GM12878 (cell line): ENCODE measurements at regions of chrX and their contacts with region 1.

Region 1: DNA sequence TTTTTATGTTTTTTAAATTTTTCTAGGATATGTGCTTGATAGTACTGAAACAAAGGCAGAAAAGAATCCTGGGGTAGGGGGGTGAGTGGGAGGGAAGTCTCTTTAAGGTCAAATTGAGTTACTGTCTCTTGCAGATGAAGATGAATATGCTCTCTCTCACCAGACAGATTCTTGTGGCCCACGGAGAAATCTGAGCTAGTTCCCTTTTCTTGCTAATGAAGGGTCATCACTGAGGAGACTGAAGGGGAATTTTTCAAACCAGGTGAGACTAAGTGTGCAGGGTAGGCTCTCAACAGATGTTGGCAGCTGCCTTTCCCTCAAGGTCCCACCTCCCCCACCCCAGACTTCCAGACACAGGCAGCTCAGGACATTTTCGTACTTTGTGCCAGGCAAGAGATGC is 21.5 kb downstream of the FAM9C start:
- DNase-seq: no peak
- ATAC-seq: peak; percentile 91
- H3K4me3 ChIP-seq: no peak overlapping the region
- H3K27ac ChIP-seq: peak overlapping the region; percentile 47
- H3K4me1 ChIP-seq: peaks cover 43% of the 10 kb centered on the region
- H3K27me3 ChIP-seq: no peaks in the 10 kb centered on the region
- CTCF ChIP-seq: no peak
- EP300 ChIP-seq: peak in 1 of 2 experiments; percentile 75; a peak in 2 of 4 replicates
- POLR2A ChIP-seq: no peak
- RAD21 ChIP-seq: no peak

Region 2: DNA sequence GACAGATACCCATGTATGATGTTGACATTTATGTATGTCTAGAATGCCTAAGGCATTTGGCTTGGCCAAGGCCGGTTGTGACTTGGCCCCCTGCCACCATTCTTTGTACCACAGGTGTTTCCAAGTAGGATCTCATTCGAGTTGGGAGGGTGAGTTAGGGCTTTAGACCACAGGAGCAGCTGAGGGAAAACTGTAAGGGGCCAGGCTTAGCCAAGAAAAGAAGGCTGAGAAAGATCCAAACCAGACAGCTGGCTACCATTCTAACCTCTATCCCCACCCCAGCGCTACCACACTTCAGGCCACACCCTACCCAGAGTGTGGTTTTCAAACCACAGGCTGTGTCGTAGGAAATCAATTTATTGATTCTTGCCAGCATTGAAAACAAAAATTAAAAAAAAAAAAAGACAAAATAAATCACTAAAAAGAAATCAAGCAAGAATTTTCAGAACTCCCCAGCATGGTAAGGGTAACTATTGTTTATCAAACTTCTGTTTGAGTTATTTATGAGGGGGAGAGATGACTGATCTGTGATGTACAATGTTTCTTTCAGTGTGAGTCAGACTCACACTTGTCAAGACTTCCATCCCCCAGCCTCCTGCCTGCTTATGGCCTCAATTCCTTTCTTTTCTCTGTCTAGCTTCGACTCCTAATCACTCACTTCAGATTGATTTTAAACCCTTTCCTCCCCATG is 38.2 kb before region 1 on chrX:
- CTCF ChIA-PET with region 1: no interaction called
- POLR2A ChIA-PET with region 1: interaction called, 3 read pairs
- RAD21 ChIA-PET with region 1: interaction called, 5 read pairs
- SMC1A ChIA-PET with region 1: interaction called, 15 read pairs
- in situ Hi-C with region 1: no loop called
- intact Hi-C with region 1: no loop called
- DNase-seq: no peak
- ATAC-seq: peak; percentile 74
- H3K4me3 ChIP-seq: peak overlapping the region; percentile 26; the same call in 1 of the 2 replicates
- H3K27ac ChIP-seq: peak overlapping the region; percentile 98
- H3K4me1 ChIP-seq: peaks cover 68% of the 10 kb centered on the region
- H3K27me3 ChIP-seq: no peaks in the 10 kb centered on the region
- CTCF ChIP-seq: no peak
- EP300 ChIP-seq: peak; percentile 68 to 87; a peak in 3 of 4 replicates
- POLR2A ChIP-seq: no peak
- RAD21 ChIP-seq: no peak; the same call in 1 of the 2 replicates

Region 3: DNA sequence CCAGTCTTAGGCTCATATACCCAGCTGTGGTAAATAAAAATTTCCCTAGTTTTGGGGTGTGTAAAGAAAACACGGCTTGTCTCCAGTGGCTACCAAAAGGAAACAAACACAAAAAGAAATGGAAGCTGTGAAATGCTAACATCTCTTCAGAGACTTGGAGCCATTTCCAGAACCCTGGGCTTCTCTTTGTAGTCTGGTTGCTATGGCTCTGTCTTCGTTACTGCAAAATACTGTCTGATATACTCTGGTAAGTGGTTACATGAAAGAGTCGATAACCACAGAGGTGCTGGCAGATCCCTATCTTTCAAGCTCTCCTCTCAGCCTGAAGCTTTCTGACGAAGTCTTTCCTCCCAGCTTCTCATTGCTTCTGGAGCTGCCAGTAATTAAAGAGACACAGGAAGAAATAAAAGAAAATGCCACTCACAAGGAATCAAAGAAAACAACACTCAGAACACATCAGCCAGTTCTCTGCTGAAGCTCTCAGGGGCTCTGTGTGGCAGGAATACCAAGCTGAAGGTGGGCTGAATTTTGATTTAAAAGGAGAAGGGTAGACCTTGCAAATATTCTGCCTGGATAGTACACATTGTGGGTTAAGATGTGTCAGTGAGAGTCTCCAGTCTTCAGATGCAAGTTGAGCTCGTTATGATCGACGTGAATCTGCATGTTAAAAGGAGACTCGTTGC is 129.0 kb after region 1 on chrX:
- CTCF ChIA-PET with region 1: no interaction called
- POLR2A ChIA-PET with region 1: no interaction called
- RAD21 ChIA-PET with region 1: no interaction called
- SMC1A ChIA-PET with region 1: no interaction called
- in situ Hi-C with region 1: no loop called
- intact Hi-C with region 1: no loop called
- DNase-seq: no peak
- ATAC-seq: no peak
- H3K4me3 ChIP-seq: no peak overlapping the region
- H3K27ac ChIP-seq: no peak overlapping the region
- H3K4me1 ChIP-seq: no peaks in the 10 kb centered on the region
- H3K27me3 ChIP-seq: no peaks in the 10 kb centered on the region
- CTCF ChIP-seq: no peak
- EP300 ChIP-seq: no peak
- POLR2A ChIP-seq: no peak
- RAD21 ChIP-seq: no peak